Heart right ventricle (tissue), 16 donors: ENCODE measurements at regions of chr13 and their contacts with region 1.

Region 1: DNA sequence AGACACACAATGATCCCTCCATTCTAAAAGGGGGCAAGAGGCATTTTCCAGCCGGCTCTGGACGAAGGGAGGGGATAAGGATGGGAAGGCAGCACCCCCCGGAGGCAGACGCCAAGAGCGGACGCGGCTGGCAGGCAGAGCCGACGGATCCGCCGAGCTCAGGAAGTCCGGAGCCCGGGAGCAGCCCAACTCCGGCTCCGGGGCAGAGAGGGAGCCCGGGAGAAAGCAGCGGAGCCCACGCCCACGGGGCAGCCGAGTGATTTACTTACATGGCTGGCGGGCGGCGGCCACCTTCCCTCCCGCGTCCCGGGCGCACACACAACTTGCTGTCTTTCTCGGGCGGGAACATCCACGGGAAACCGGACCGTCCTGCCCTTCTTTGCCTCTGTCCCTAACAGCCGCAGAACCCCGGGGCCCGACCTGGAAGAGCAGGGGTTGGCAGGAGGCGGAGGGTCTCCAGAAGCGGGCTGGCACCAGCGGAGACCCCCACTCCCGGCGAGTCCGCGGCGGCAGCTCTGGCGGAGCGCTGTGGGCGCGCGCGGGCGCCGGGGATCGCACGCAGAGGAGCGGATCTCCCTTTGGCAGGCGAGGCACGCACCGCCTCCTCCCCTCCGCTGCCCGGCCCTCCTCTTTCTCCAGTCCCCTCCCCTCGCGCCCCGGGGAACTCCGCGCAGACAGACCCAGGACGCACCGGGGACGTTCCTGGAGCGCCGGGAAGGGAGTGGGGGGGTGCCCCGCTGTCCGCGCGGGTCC is at the start of gene LHFPL6:
- DNase-seq: peak; percentile 88 to 90
- ATAC-seq: peak; percentile 93 to 98 (median 94)
- H3K4me3 ChIP-seq: peak within 1 kb of the TSS; percentile 69 to 96 (median 90)
- H3K27ac ChIP-seq: peak within 1 kb of the TSS; percentile 87 to 98 (median 96)
- H3K4me1 ChIP-seq: peaks cover 0 to 50% (median 21%) of the 10 kb centered on the region in 9 donors
- H3K27me3 ChIP-seq: peaks cover 0 to 33% (median 0%) of the 10 kb centered on the region in 7 donors
- CTCF ChIP-seq: peak in 7 of 9 donors; percentile 39 to 69 (median 45)
- total RNA-seq, gene LHFPL6: 41.5 to 65.8 (median 58.2) TPM

Region 2: GRCh38 chr13:39347926-39348901 is 254.6 kb before region 1 on chr13:
- intact Hi-C with region 1: loop called in 1 of 10 experiments (anchors 5 kb)
- DNase-seq: peak; percentile 52 to 63
- ATAC-seq: peak; percentile 82 to 96 (median 87)
- H3K4me3 ChIP-seq: peak overlapping the region in 2 of 10 donors; percentile 1 to 21
- H3K27ac ChIP-seq: peak overlapping the region in 8 of 10 donors; percentile 38 to 78 (median 62)
- H3K4me1 ChIP-seq: peaks cover 11 to 72% (median 56%) of the 10 kb centered on the region in 9 donors
- H3K27me3 ChIP-seq: no peaks in the 10 kb centered on the region
- CTCF ChIP-seq: peak in 2 of 9 donors; percentile 10 to 14

Region 3: GRCh38 chr13:39538816-39539790 is 63.7 kb before region 1 on chr13:
- intact Hi-C with region 1: no loop called
- DNase-seq: no peak
- ATAC-seq: no peak
- H3K4me3 ChIP-seq: no peak overlapping the region
- H3K27ac ChIP-seq: no peak overlapping the region
- H3K4me1 ChIP-seq: peaks cover 7 to 85% (median 62%) of the 10 kb centered on the region in 9 donors
- H3K27me3 ChIP-seq: no peaks in the 10 kb centered on the region
- CTCF ChIP-seq: no peak

Region 4: GRCh38 chr13:39655041-39655568 is 52.3 kb after region 1 on chr13:
- intact Hi-C with region 1: no loop called
- DNase-seq: no peak
- ATAC-seq: peak in 3 of 8 donors; percentile 6 to 25 (median 6)
- H3K4me3 ChIP-seq: peak overlapping the region; percentile 72 to 96 (median 88)
- H3K27ac ChIP-seq: peak overlapping the region in 8 of 10 donors; percentile 70 to 86 (median 78)
- H3K4me1 ChIP-seq: peaks cover 0 to 22% (median 14%) of the 10 kb centered on the region in 9 donors
- H3K27me3 ChIP-seq: no peaks in the 10 kb centered on the region
- CTCF ChIP-seq: no peak